Gastrocnemius medialis (tissue), 4 donors: ENCODE measurements at regions of chr12 and their contacts with region 1.

Region 1: DNA sequence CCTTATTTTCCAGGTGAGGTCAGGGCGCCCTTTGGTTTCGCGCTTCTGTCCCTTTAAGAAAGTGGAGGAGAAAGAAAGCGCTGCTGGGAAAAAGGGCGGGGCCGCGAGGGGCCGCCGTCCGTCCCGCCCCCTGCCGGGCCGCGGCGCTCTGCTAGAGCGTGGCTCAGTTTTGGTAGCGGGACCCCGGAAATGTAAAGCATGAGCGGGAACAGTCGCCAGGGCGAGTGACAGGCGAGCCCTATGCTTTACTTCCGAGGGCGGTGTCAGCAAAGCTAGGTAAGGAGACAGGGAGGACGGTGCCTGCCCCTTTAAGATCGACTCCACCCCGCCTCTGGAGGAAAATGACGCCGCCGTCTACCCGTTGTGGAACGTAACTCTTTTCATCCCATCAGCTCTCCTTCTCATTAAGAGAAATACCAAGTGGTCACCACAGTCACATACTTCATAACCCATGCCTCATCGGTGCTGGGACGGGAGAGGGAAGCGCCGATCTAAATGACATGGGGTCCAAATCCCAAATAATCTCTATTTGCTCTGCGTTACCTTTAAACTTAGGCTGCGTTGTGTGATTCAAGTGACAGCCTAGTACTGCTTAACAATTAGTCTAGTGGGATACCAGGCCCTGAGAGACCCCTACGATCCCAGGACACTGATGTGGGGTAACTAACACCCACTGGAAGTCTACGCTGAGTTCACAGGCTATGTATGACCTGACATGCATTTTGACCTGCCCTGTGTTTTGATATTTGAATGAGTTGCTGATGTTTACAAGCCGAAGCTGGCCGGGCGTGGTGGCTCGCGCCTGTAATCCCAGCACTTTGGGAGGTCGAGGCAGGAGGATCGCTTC is at the start of gene ETFBKMT:
- DNase-seq: peak; percentile 81 to 84
- ATAC-seq: peak; percentile 96 to 98
- H3K4me3 ChIP-seq: peak within 1 kb of the TSS; percentile 75 to 96 (median 90)
- H3K27ac ChIP-seq: peak within 1 kb of the TSS; percentile 89 to 98 (median 95)
- H3K4me1 ChIP-seq: peaks cover 4 to 12% of the 10 kb centered on the region in 2 donors
- H3K27me3 ChIP-seq: no peaks in the 10 kb centered on the region
- CTCF ChIP-seq: peak; percentile 24 to 76 (median 64)
- POLR2A ChIP-seq: peak; percentile 28 to 63
- total RNA-seq, gene ETFBKMT: 2.6 to 13.5 (median 5.0) TPM

Region 2: DNA sequence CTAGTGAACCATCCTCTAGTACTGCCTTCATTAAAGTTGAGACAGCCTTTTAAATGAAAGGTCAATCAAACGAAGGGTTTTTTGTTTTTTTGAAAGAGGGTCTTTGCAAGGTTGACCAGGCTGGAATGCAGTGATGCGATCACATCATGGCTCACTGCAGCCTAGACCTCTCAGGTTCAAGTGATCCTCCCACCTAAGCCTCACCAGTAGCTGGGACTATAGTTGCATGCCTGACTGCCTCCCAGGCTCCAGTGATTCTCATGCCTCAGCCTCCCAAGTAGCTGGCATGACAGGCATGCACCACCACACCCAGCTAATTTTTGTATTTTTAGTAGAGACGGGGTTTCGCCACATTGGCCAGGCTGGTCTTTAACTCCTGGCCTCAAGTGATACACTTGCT is 218.7 kb before region 1 on chr12:
- in situ Hi-C with region 1: no loop called
- intact Hi-C with region 1: no loop called
- DNase-seq: no peak
- ATAC-seq: no peak
- H3K4me3 ChIP-seq: no peak overlapping the region
- H3K27ac ChIP-seq: no peak overlapping the region
- H3K4me1 ChIP-seq: no peaks in the 10 kb centered on the region
- H3K27me3 ChIP-seq: no peaks in the 10 kb centered on the region
- CTCF ChIP-seq: no peak
- POLR2A ChIP-seq: no peak

Region 3: GRCh38 chr12:31702047-31702446 is 42.7 kb after region 1 on chr12:
- in situ Hi-C with region 1: no loop called
- intact Hi-C with region 1: no loop called
- DNase-seq: no peak
- ATAC-seq: no peak
- H3K4me3 ChIP-seq: no peak overlapping the region
- H3K27ac ChIP-seq: no peak overlapping the region
- H3K4me1 ChIP-seq: no peaks in the 10 kb centered on the region
- H3K27me3 ChIP-seq: no peaks in the 10 kb centered on the region
- CTCF ChIP-seq: no peak
- POLR2A ChIP-seq: no peak

Region 4: DNA sequence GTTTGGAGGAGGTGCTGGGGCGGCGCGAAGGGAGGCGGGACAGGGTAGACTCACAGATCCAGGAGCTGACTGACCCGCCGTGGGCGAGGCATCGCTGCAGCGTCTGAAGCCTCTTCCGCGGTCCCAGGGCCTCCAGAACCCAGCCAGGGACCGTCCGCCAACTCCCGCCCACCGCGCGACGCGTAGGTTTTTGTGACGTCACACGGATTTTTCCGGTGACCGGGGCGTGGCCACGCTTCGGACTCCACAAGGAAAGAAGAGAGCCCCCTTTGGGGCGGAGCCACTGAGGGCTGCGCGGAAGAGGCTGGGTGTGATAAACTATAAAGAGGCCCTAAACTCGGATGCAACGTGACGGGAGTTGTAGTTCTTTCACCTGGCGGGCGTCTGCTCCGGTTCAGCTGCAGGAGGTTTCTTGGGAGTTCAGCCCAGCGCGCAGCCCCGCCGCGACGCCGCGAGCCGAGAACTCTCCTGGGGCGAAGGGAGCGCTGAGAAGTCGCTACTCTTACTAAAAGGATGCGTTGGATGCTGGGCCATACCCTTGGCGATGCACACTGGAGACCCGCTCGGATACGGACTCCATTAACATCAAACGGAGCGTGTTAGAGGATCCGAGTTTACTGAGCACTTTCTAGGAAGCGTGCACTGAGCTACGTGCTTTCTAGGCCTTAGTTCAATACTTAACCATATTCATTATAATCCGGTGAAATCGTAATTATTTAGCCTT is 69.8 kb after region 1 on chr12 and contains the start of gene AMN1:
- in situ Hi-C with region 1: no loop called
- intact Hi-C with region 1: loop called (anchors 1 kb)
- DNase-seq: peak; percentile 94 to 99
- ATAC-seq: peak; percentile 88 to 91
- H3K4me3 ChIP-seq: peak within 1 kb of the TSS; percentile 72 to 89 (median 79)
- H3K27ac ChIP-seq: peak within 1 kb of the TSS; percentile 91 to 97 (median 94)
- H3K4me1 ChIP-seq: peaks cover 50 to 54% of the 10 kb centered on the region in 2 donors
- H3K27me3 ChIP-seq: no peaks in the 10 kb centered on the region
- CTCF ChIP-seq: peak in 1 of 5 experiments; percentile 32
- POLR2A ChIP-seq: peak; percentile 75 to 92
- total RNA-seq, gene AMN1: 14.9 to 27.2 (median 18.6) TPM

Region 5: GRCh38 chr12:32106517-32107358 is 447.4 kb after region 1 on chr12 and contains the start of gene BICD1:
- in situ Hi-C with region 1: no loop called
- intact Hi-C with region 1: loop called (anchors 10 kb)
- DNase-seq: peak; percentile 55 to 75
- ATAC-seq: peak; percentile 70 to 80
- H3K4me3 ChIP-seq: peak within 1 kb of the TSS; percentile 65 to 82 (median 72)
- H3K27ac ChIP-seq: peak within 1 kb of the TSS; percentile 76 to 85 (median 78)
- H3K4me1 ChIP-seq: peaks cover 11 to 13% of the 10 kb centered on the region in 2 donors
- H3K27me3 ChIP-seq: peaks cover 0 to 5% (median 0%) of the 10 kb centered on the region in 3 donors
- CTCF ChIP-seq: peak in 3 of 5 experiments; percentile 17 to 40 (median 32)
- POLR2A ChIP-seq: peak; percentile 69 to 75
- total RNA-seq, gene BICD1: 1.4 to 2.3 (median 2.0) TPM

Region 6: DNA sequence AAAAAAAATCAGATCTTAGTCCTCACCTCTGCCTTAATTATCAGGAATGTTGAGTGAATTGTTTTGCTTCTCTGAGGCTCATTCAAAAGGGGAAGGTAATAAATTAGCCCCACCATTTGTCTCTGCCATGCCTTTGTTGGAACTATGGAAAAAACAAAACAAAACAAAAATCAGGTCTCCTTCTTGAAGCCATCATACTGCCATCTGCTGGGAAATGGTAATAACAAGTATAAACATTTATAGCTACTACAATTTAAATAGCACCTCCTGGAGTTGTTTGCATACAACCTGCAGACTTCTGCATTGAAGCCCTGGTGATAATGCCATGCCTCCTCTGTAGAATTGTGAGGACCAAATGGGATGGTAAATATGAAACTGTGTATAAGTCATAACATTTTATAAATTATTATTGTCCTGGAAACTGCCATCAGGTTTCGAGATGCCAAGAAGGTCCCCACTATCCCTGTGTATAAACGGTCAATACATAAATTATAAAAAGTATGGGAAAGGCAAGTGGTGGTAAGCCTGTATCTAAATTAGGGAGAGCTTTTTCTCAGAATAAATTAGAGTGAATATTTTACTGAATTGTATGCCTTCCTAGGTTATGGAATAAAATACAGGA is 652.9 kb after region 1 on chr12:
- in situ Hi-C with region 1: loop called (anchors 10 to 25 kb)
- intact Hi-C with region 1: loop called (anchors 5 kb)
- DNase-seq: no peak
- ATAC-seq: peak in 1 of 2 donors; percentile 39
- H3K4me3 ChIP-seq: no peak overlapping the region
- H3K27ac ChIP-seq: no peak overlapping the region
- H3K4me1 ChIP-seq: no peaks in the 10 kb centered on the region
- H3K27me3 ChIP-seq: no peaks in the 10 kb centered on the region
- CTCF ChIP-seq: peak; percentile 19 to 54 (median 30)
- POLR2A ChIP-seq: no peak